CD4-positive, alpha-beta T cell (primary cell): ENCODE measurements at regions of chr21 and their contacts with region 1.

Region 1: DNA sequence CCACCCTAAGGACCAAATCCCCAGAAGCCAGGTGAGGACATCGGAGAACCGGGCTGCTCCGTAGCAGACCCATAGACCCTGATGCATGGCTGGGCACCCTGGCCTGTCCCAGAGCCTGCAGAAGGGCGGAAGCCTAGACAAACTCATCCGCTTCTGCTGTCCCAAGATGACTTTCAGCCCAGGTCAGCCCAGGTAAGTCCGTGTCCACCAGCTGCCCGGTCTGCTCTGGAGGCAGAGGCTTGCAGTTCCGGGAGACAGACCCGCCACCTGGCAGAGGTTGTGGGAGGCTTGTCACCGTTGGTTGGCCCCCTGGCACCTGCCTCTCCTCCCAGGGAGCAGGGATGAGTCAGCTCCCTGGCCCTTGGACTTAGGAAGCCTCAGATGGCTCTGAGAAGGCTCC is 22.8 kb upstream of the POFUT2 start:
- DNase-seq: no peak
- ATAC-seq: no peak
- H3K4me3 ChIP-seq: no peak overlapping the region
- H3K4me3 Mint-ChIP-seq: no peak overlapping the region
- H3K27ac ChIP-seq: no peak overlapping the region
- H3K27ac Mint-ChIP-seq: no peak overlapping the region
- H3K4me1 ChIP-seq: peaks cover 16% of the 10 kb centered on the region
- H3K4me1 Mint-ChIP-seq: peaks cover 15% of the 10 kb centered on the region
- H3K27me3 ChIP-seq: no peaks in the 10 kb centered on the region
- H3K27me3 Mint-ChIP-seq: no peaks in the 10 kb centered on the region
- CTCF ChIP-seq: no peak

Region 2: DNA sequence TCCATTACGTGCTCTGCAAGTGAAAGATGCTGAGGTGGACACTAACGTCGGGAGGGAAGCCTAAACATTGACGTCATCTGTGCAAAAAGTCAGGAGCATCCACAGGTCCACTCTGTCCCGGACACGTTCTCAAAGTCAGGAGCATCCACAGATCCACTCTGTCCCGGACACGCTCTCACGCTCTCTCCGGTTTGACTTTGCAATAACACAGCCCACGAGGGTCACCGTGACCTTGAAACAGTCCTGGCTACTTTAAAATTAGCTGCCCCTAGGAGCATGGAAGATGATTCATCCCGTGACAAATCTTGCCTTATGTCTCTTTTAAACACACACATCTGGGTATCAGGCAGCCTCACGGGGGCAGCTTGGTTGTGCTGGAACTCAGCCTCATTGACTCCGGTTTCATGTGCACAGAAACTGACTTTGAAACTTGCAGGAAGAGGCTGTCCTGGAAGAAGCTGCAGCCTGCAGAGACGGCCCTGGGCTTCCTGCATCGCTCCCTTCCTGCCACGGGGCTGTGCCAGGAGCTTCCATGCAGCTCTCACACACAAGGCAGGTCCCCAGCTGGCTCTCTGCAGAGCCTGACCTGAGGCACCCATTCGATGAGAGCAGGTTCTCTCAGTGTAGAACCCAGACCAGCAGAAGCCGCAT is 76.4 kb after region 1 on chr21:
- CTCF ChIA-PET with region 1: no interaction called
- POLR2A ChIA-PET with region 1: no interaction called
- intact Hi-C with region 1: loop called in 1 of 2 experiments (anchors 5 kb)
- DNase-seq: no peak
- ATAC-seq: no peak
- H3K4me3 ChIP-seq: no peak overlapping the region
- H3K4me3 Mint-ChIP-seq: no peak overlapping the region
- H3K27ac ChIP-seq: no peak overlapping the region
- H3K27ac Mint-ChIP-seq: no peak overlapping the region
- H3K4me1 ChIP-seq: no peaks in the 10 kb centered on the region
- H3K4me1 Mint-ChIP-seq: no peaks in the 10 kb centered on the region
- H3K27me3 ChIP-seq: peaks cover 8 to 18% of the 10 kb centered on the region in 2 experiments
- H3K27me3 Mint-ChIP-seq: peaks cover 28% of the 10 kb centered on the region
- CTCF ChIP-seq: no peak